PC-3 (cell line): ENCODE measurements at regions of chr10 and their contacts with region 1.

Region 1: GRCh38 chr10:28663576-28664313 is 13.6 kb upstream of the BAMBI start:
- DNase-seq: peak; percentile 86
- ATAC-seq: peak; percentile 80
- H3K4me3 ChIP-seq: no peak overlapping the region
- H3K27ac ChIP-seq: no peak overlapping the region
- H3K4me1 ChIP-seq: peaks cover 23% of the 10 kb centered on the region
- H3K27me3 ChIP-seq: no peaks in the 10 kb centered on the region
- CTCF ChIP-seq: peak; percentile 91

Region 2: DNA sequence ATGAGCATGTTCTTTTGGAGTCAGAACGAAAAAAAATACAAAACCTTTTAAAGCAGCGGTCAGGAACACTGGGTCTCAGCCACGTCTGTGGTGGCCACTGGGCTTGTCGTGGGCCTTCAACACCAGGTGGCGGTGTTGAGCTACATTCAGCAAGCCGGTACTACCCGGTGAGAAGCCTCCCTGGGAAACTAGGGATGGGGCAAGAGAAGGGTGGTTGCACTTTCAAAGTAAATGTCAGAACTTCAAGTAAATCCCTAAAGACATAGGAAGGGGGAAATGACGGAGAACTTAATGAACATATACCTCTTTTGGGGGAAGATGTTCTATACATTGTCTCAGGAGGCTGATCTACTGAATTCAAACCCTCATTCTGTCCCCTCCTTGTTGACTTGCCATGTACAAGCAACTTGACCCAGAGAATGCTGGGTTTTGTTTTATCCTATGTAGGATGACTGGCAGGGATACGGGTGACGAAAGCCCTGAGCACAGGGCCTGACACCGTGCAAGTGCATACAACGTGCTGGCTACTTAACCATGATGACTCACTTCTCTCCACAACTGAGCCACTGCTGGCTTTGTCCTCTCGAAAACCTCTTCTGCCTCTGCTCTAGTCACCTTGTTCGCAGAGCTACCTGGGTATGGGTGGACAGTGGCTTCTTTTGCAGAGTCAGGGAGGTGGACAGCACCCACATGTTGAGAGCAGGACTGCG is 35.4 kb before region 1 on chr10:
- CTCF ChIA-PET with region 1: interaction called, 5 read pairs
- POLR2A ChIA-PET with region 1: no interaction called
- intact Hi-C with region 1: loop called (anchors 5 kb)
- DNase-seq: peak; percentile 76
- ATAC-seq: peak; percentile 86
- H3K4me3 ChIP-seq: no peak overlapping the region
- H3K27ac ChIP-seq: no peak overlapping the region
- H3K4me1 ChIP-seq: peaks cover 15% of the 10 kb centered on the region
- H3K27me3 ChIP-seq: no peaks in the 10 kb centered on the region
- CTCF ChIP-seq: peak; percentile 90

Region 3: GRCh38 chr10:28991326-28992270 is 327.9 kb after region 1 on chr10:
- CTCF ChIA-PET with region 1: interaction called, 12 read pairs
- POLR2A ChIA-PET with region 1: no interaction called
- intact Hi-C with region 1: loop called (anchors 5 kb)
- DNase-seq: peak; percentile 80
- ATAC-seq: peak; percentile 93
- H3K4me3 ChIP-seq: no peak overlapping the region
- H3K27ac ChIP-seq: peak overlapping the region; percentile 68
- H3K4me1 ChIP-seq: peaks cover 21% of the 10 kb centered on the region
- H3K27me3 ChIP-seq: no peaks in the 10 kb centered on the region
- CTCF ChIP-seq: peak; percentile 91

Region 4: GRCh38 chr10:29131952-29132820 is 468.4 kb after region 1 on chr10:
- CTCF ChIA-PET with region 1: interaction called, 3 read pairs
- POLR2A ChIA-PET with region 1: no interaction called
- intact Hi-C with region 1: loop called (anchors 1 kb)
- DNase-seq: peak; percentile 56
- ATAC-seq: peak; percentile 85
- H3K4me3 ChIP-seq: no peak overlapping the region
- H3K27ac ChIP-seq: peak overlapping the region; percentile 46
- H3K4me1 ChIP-seq: peaks cover 12% of the 10 kb centered on the region
- H3K27me3 ChIP-seq: no peaks in the 10 kb centered on the region
- CTCF ChIP-seq: no peak

Region 5: DNA sequence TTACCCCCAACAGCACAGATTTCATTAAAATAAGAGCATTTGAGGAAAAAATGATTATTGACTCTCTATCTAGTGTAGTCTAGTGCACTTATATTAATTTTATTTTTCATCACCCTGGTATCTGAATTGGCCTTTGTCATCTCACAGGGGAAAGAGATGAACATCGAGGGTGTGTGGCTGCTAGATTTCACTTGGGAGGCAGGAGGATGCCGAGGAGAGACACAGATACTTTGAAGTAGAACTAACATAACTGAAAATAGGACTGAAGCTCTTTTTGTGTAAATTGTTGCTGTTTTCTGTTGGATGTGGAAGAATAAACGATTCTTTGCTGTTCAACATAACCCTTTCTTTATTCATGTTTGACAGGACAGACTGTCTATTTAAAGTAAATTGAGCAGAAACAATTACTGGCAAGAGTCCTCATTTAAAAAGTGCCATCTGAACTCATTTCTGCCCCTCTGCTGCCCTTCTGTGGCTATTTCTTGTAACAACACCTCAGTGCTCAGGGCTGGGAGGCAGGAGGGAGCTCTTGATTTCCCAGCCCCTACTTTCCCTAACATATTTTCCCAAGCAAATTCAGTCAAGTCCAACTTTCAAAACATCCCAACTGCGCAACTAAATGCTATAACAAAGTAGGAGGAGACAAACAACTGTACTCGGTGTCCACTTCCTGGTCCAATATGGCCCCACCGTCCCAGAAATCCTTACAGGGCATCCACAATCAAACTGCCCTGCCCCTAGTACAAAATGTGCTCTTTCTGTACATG is 640.7 kb after region 1 on chr10:
- CTCF ChIA-PET with region 1: interaction called, 5 read pairs
- POLR2A ChIA-PET with region 1: no interaction called
- intact Hi-C with region 1: loop called (anchors 1 kb)
- DNase-seq: peak; percentile 74
- ATAC-seq: peak; percentile 62
- H3K4me3 ChIP-seq: no peak overlapping the region
- H3K27ac ChIP-seq: no peak overlapping the region
- H3K4me1 ChIP-seq: peaks cover 4% of the 10 kb centered on the region; the same call in 1 of the 2 replicates
- H3K27me3 ChIP-seq: no peaks in the 10 kb centered on the region
- CTCF ChIP-seq: peak; percentile 84

Region 6: GRCh38 chr10:30309401-30309800 is 1645.7 kb after region 1 on chr10:
- CTCF ChIA-PET with region 1: interaction called, 14 read pairs
- POLR2A ChIA-PET with region 1: no interaction called
- intact Hi-C with region 1: no loop called
- DNase-seq: no peak
- ATAC-seq: no peak
- H3K4me3 ChIP-seq: no peak overlapping the region
- H3K27ac ChIP-seq: no peak overlapping the region
- H3K4me1 ChIP-seq: no peaks in the 10 kb centered on the region
- H3K27me3 ChIP-seq: no peaks in the 10 kb centered on the region
- CTCF ChIP-seq: no peak